ENCODE measurements at regions of chr17 and their contacts with region 1.

Region 1: DNA sequence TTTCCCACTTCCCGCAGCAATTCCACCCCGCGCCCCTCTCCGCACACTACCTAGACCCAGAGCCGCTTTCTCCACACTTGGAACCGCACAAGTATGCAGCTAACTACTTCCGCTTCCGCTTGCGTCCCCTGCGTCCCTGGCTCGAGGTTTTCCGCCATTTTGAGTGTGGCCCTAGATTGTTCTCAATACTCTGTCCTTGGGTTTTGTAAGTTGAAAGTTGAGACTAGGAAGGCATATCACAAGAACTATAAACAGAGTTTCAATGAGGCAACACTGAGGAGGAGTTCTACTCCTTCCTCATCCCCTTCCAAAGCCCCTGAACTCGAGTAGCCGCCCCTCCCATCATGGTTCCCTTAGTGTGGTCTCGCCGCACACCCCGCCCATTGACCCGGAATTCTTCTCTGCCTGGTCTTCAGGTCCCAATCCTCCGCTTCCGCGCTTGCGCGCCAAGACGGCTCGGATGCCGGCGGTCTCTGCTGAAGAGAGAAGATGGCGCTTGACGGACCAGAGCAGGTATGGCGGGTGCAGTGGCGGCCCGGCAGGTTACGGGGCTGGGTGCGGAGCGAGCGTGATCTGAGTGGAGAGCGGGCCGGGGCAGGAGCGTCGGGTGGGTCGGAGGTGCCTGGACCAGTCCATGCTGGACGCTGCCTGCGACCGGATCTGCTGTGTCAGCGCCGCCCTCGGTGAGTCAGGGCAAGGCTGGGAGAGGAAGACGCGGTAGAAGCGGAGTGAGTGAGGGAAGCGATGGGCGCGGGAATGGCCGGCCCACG is at the starts of genes FTSJ3 and PSMC5:
- DNase-seq: peak; percentile 96
- H3K4me3 ChIP-seq: peak within 1 kb of the TSS; percentile 83
- H3K4me3 Mint-ChIP-seq: peak within 1 kb of the TSS; percentile 84
- H3K27ac Mint-ChIP-seq: peak within 1 kb of the TSS; percentile 99
- H3K4me1 ChIP-seq: peaks cover 16% of the 10 kb centered on the region; the same call in 1 of the 2 replicates
- H3K4me1 Mint-ChIP-seq: peaks cover 17% of the 10 kb centered on the region
- H3K27me3 ChIP-seq: no peaks in the 10 kb centered on the region
- H3K27me3 Mint-ChIP-seq: no peaks in the 10 kb centered on the region
- CTCF ChIP-seq: peak; percentile 63 to 80
- total RNA-seq, gene FTSJ3: 75.9 and 76.3 TPM in 2 replicates
- total RNA-seq, gene PSMC5: 197 TPM in 2 replicates

Region 2: GRCh38 chr17:63697341-63698286 is 129.6 kb before region 1 on chr17:
- CTCF ChIA-PET with region 1: no interaction called
- POLR2A ChIA-PET with region 1: no interaction called
- intact Hi-C with region 1: loop called (anchors 10 kb)
- DNase-seq: peak in 1 of 2 experiments; percentile 69
- H3K4me3 ChIP-seq: no peak overlapping the region
- H3K4me3 Mint-ChIP-seq: peak overlapping the region; percentile 65
- H3K27ac Mint-ChIP-seq: no peak overlapping the region
- H3K4me1 ChIP-seq: no peaks in the 10 kb centered on the region
- H3K4me1 Mint-ChIP-seq: no peaks in the 10 kb centered on the region
- H3K27me3 ChIP-seq: no peaks in the 10 kb centered on the region
- H3K27me3 Mint-ChIP-seq: no peaks in the 10 kb centered on the region
- CTCF ChIP-seq: peak; percentile 29 to 56

Region 3: DNA sequence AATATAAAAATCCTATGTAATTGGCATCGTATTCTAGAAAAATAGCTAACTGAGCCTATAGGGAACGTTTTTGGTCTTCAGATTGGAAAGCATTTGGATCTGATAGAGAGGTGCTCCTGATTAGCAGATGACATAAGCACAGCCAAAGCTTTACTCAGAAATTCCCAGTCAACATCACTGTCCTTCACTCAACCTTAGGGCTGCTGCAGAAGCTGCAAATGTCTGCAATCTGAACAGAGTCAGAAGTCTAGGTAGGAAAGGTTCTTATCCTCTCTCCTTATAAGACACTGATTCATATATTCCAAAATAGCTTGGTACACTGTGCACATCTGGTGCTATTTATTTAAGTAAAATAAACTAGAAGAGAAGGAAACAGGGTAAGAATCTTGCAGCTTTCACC is 104.8 kb before region 1 on chr17:
- CTCF ChIA-PET with region 1: no interaction called
- POLR2A ChIA-PET with region 1: no interaction called
- intact Hi-C with region 1: no loop called
- DNase-seq: no peak
- H3K4me3 ChIP-seq: no peak overlapping the region
- H3K4me3 Mint-ChIP-seq: no peak overlapping the region
- H3K27ac Mint-ChIP-seq: no peak overlapping the region
- H3K4me1 ChIP-seq: no peaks in the 10 kb centered on the region
- H3K4me1 Mint-ChIP-seq: no peaks in the 10 kb centered on the region
- H3K27me3 ChIP-seq: no peaks in the 10 kb centered on the region
- H3K27me3 Mint-ChIP-seq: no peaks in the 10 kb centered on the region
- CTCF ChIP-seq: no peak

Region 4: GRCh38 chr17:63842540-63843386 is 15.6 kb after region 1 on chr17 and contains the start of gene SMARCD2:
- CTCF ChIA-PET with region 1: interaction called, 7 read pairs
- POLR2A ChIA-PET with region 1: interaction called, 4 read pairs
- intact Hi-C with region 1: loop called (anchors 1 kb)
- DNase-seq: peak; percentile 99
- H3K4me3 ChIP-seq: peak within 1 kb of the TSS; percentile 95
- H3K4me3 Mint-ChIP-seq: peak within 1 kb of the TSS; percentile 99
- H3K27ac Mint-ChIP-seq: peak within 1 kb of the TSS; percentile 87
- H3K4me1 ChIP-seq: peaks cover 15% of the 10 kb centered on the region
- H3K4me1 Mint-ChIP-seq: peaks cover 28% of the 10 kb centered on the region
- H3K27me3 ChIP-seq: no peaks in the 10 kb centered on the region
- H3K27me3 Mint-ChIP-seq: no peaks in the 10 kb centered on the region
- CTCF ChIP-seq: no peak
- total RNA-seq, gene SMARCD2: 134 TPM in 2 replicates

Region 5: DNA sequence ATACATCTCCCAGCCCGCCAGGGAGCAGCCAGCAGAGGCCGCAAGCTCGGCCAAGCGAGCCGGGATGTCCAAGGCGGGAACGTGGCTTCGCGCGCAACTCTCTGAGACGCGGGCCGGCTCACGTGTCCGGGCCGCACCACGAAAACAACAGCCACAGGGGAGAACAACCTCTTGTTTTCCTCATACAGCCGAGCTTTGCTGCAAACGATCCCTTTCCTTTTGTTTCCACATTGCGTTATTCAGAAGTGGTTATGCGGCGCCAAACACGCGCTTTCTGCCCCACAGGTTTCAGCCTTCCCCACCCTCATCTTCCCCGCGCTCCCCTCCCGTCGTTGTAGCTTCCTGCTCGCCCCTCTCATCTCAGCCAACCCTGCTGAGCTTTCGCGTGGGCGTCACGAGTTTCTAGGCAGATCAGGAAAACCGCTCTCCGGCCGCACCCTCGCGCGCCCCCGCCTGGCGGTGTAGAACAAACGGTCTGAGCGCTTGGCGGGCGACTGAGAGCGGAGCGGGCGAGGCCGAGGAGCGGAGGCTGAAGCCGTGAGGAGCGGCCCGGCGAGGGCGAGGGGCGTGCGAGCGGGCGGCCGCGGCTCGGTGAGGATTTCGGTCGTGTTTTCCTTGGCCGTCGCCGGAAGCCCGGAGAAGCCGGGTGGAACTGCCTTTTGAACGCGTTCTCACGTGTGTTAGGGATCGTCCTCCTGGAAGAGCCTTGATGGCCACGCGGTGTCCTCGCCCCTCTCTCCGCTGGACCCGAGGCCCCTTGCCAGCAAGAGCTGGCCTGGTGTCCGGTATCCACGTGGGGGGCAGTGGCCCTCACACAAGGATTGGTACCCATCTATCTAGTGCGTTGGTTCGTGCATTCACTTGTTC is 21.9 kb after region 1 on chr17:
- CTCF ChIA-PET with region 1: interaction called, 6 read pairs
- POLR2A ChIA-PET with region 1: interaction called, 17 read pairs
- intact Hi-C with region 1: no loop called
- DNase-seq: peak; percentile 98 to 99
- H3K4me3 ChIP-seq: peak overlapping the region; percentile 84
- H3K4me3 Mint-ChIP-seq: peak overlapping the region; percentile 90
- H3K27ac Mint-ChIP-seq: peak overlapping the region; percentile 99
- H3K4me1 ChIP-seq: peaks cover 4% of the 10 kb centered on the region; the same call in 1 of the 2 replicates
- H3K4me1 Mint-ChIP-seq: peaks cover 11% of the 10 kb centered on the region
- H3K27me3 ChIP-seq: no peaks in the 10 kb centered on the region
- H3K27me3 Mint-ChIP-seq: no peaks in the 10 kb centered on the region
- CTCF ChIP-seq: peak; percentile 59 to 89